Activated B cell treated with CpG ODN at 0.5 μM for 24 hours (primary cell): ENCODE measurements at regions of chr4 and their contacts with region 1.

Region 1: GRCh38 chr4:176340871-176341685 is 21.3 kb downstream of the SPCS3 start:
- DNase-seq: no peak
- ATAC-seq: peak; percentile 49
- H3K4me3 Mint-ChIP-seq: no peak overlapping the region
- H3K27ac Mint-ChIP-seq: no peak overlapping the region
- H3K4me1 Mint-ChIP-seq: peaks cover 2% of the 10 kb centered on the region
- H3K27me3 Mint-ChIP-seq: no peaks in the 10 kb centered on the region
- CTCF ChIP-seq: peak; percentile 92

Region 2: GRCh38 chr4:174365018-174365587 is 1976.0 kb before region 1 on chr4:
- CTCF ChIA-PET with region 1: no interaction called
- POLR2A ChIA-PET with region 1: no interaction called
- intact Hi-C with region 1: loop called (anchors 2 kb)
- DNase-seq: no peak
- ATAC-seq: no peak
- H3K4me3 Mint-ChIP-seq: no peak overlapping the region
- H3K27ac Mint-ChIP-seq: no peak overlapping the region
- H3K4me1 Mint-ChIP-seq: no peaks in the 10 kb centered on the region
- H3K27me3 Mint-ChIP-seq: no peaks in the 10 kb centered on the region
- CTCF ChIP-seq: no peak

Region 3: GRCh38 chr4:175560604-175561003 is 780.5 kb before region 1 on chr4:
- CTCF ChIA-PET with region 1: no interaction called
- POLR2A ChIA-PET with region 1: no interaction called
- intact Hi-C with region 1: loop called (anchors 5 kb)
- DNase-seq: no peak
- ATAC-seq: no peak
- H3K4me3 Mint-ChIP-seq: no peak overlapping the region
- H3K27ac Mint-ChIP-seq: no peak overlapping the region
- H3K4me1 Mint-ChIP-seq: no peaks in the 10 kb centered on the region
- H3K27me3 Mint-ChIP-seq: no peaks in the 10 kb centered on the region
- CTCF ChIP-seq: no peak

Region 4: GRCh38 chr4:175646802-175647201 is 694.3 kb before region 1 on chr4:
- CTCF ChIA-PET with region 1: no interaction called
- POLR2A ChIA-PET with region 1: no interaction called
- intact Hi-C with region 1: no loop called
- DNase-seq: no peak
- ATAC-seq: no peak
- H3K4me3 Mint-ChIP-seq: no peak overlapping the region
- H3K27ac Mint-ChIP-seq: no peak overlapping the region
- H3K4me1 Mint-ChIP-seq: no peaks in the 10 kb centered on the region
- H3K27me3 Mint-ChIP-seq: no peaks in the 10 kb centered on the region
- CTCF ChIP-seq: no peak

Region 5: GRCh38 chr4:175947117-175947722 is 393.9 kb before region 1 on chr4:
- CTCF ChIA-PET with region 1: interaction called, 11 read pairs
- POLR2A ChIA-PET with region 1: no interaction called
- intact Hi-C with region 1: loop called (anchors 1 kb)
- DNase-seq: no peak
- ATAC-seq: no peak
- H3K4me3 Mint-ChIP-seq: no peak overlapping the region
- H3K27ac Mint-ChIP-seq: no peak overlapping the region
- H3K4me1 Mint-ChIP-seq: peaks cover 6% of the 10 kb centered on the region
- H3K27me3 Mint-ChIP-seq: no peaks in the 10 kb centered on the region
- CTCF ChIP-seq: peak; percentile 18

Region 6: DNA sequence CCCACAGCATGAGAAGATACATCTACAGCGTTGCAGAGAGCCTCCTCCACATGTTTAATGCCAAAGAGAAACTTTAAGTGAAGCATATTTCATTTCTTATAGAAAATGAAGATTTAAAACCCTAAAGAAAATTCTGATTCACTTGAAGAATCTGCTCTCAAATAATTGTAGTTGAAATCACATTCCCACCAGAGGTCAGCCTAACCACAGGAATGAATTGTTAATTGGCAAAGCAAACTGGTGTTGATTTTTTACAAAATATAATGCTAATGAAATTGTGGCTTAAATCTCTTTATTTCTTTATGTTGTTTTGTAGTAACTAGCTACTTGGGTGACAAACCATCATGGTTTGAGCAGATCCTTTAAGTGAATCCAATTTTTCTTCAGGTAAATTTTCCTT is 306.6 kb before region 1 on chr4:
- CTCF ChIA-PET with region 1: interaction called, 52 read pairs
- POLR2A ChIA-PET with region 1: interaction called, 3 read pairs
- intact Hi-C with region 1: loop called (anchors 1 kb)
- DNase-seq: no peak
- ATAC-seq: no peak
- H3K4me3 Mint-ChIP-seq: no peak overlapping the region
- H3K27ac Mint-ChIP-seq: no peak overlapping the region
- H3K4me1 Mint-ChIP-seq: peaks cover 4% of the 10 kb centered on the region
- H3K27me3 Mint-ChIP-seq: no peaks in the 10 kb centered on the region
- CTCF ChIP-seq: no peak

Region 7: GRCh38 chr4:176150356-176150682 is 190.8 kb before region 1 on chr4:
- CTCF ChIA-PET with region 1: interaction called, 20 read pairs
- POLR2A ChIA-PET with region 1: no interaction called
- intact Hi-C with region 1: loop called (anchors 1 kb)
- DNase-seq: no peak
- ATAC-seq: no peak
- H3K4me3 Mint-ChIP-seq: no peak overlapping the region
- H3K27ac Mint-ChIP-seq: no peak overlapping the region
- H3K4me1 Mint-ChIP-seq: no peaks in the 10 kb centered on the region
- H3K27me3 Mint-ChIP-seq: no peaks in the 10 kb centered on the region
- CTCF ChIP-seq: no peak

Region 8: DNA sequence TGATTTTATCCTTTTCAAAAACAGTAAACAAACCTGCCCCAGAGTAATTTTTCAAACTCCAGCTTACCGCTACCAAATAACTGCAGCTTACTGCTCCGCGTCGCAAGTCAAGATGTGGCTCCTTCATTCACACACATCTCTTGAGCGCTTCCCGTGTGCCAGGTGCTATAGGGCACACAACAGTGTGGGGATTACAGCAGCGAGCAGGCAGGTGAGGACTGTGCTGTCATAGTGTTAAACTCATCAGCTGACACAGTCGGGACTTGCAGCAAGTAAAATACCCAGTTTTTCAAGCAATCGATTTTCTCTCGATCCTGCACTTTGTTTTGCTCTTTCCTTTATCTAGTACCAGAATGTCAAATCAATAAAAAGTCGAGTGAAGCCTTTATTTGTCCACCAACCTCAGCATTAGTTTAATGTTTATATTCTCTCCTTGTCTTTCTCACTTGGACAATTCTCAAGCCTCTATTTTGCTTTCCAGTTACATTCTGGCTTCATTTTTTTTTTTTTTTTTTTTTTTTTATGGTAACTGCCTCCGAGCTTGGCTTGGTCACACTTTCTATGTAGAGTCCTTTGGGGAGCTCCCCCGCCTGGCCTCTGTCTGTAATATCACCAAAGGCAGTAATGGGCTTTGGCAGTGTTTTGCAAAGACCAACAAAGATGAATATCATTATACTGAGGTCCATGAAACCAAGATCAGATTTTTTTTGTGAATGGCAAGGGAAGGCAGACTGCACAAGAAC is 63.7 kb before region 1 on chr4:
- CTCF ChIA-PET with region 1: no interaction called
- POLR2A ChIA-PET with region 1: no interaction called
- intact Hi-C with region 1: loop called (anchors 2 kb)
- DNase-seq: no peak
- ATAC-seq: peak; percentile 50
- H3K4me3 Mint-ChIP-seq: no peak overlapping the region
- H3K27ac Mint-ChIP-seq: no peak overlapping the region
- H3K4me1 Mint-ChIP-seq: no peaks in the 10 kb centered on the region
- H3K27me3 Mint-ChIP-seq: peaks cover 18% of the 10 kb centered on the region
- CTCF ChIP-seq: no peak

Region 9: GRCh38 chr4:176593943-176594342 is 252.9 kb after region 1 on chr4:
- CTCF ChIA-PET with region 1: no interaction called
- POLR2A ChIA-PET with region 1: no interaction called
- intact Hi-C with region 1: no loop called
- DNase-seq: no peak
- ATAC-seq: no peak
- H3K4me3 Mint-ChIP-seq: no peak overlapping the region
- H3K27ac Mint-ChIP-seq: no peak overlapping the region
- H3K4me1 Mint-ChIP-seq: no peaks in the 10 kb centered on the region
- H3K27me3 Mint-ChIP-seq: no peaks in the 10 kb centered on the region
- CTCF ChIP-seq: no peak